IMR-90 (cell line): ENCODE measurements at regions of chr2 and their contacts with region 1.

Region 1: DNA sequence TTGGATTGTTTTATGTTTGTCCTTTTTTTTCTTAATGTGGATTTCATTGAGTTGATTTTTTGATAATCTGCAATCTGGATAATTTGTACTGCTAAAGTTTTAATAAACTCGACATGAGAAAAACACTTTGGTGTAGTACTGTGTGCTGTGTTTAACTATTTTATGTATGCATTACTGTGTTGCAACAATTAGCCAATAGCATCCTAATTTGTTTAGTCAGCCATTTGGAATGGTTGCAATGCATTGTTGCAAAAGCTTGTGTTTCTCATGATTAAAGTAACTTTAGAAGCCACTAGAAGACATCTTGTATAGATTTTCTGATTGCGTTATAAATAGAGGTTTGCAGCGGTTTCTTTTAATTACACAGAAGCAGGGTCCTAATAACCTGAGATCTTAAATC is 53.5 kb downstream of the PPIG start:
- DNase-seq: peak; percentile 81
- ATAC-seq: peak; percentile 63
- H3K4me3 ChIP-seq: no peak overlapping the region
- H3K27ac ChIP-seq: no peak overlapping the region
- H3K4me1 ChIP-seq: peaks cover 3% of the 10 kb centered on the region; the same call in 1 of the 2 replicates
- H3K27me3 ChIP-seq: no peaks in the 10 kb centered on the region
- CTCF ChIP-seq: no peak
- POLR2A ChIP-seq: no peak
- RAD21 ChIP-seq: no peak

Region 2: DNA sequence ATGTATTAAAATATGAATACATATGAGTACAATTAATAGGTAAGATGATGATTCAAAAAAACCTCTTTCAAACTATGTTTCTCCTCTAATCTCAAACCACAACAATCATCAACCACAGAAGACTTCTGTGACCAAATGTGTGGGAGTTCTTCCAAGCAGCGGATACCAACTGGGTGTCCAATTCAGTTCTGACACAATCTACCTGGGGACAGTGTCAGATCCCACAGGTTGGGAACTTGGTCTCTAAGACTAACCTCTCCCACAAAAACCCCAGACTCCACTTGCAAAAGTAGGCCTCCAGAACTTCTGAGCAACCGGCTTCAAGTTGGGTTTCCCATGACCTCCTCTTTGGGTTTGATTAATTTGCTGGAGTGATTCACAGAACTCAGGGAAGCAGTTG is 90.9 kb before region 1 on chr2:
- CTCF ChIA-PET with region 1: no interaction called
- POLR2A ChIA-PET with region 1: no interaction called
- dilution Hi-C with region 1: no loop called
- in situ Hi-C with region 1: no loop called
- intact Hi-C with region 1: no loop called
- DNase-seq: no peak
- ATAC-seq: no peak
- H3K4me3 ChIP-seq: no peak overlapping the region
- H3K27ac ChIP-seq: no peak overlapping the region
- H3K4me1 ChIP-seq: no peaks in the 10 kb centered on the region
- H3K27me3 ChIP-seq: no peaks in the 10 kb centered on the region
- CTCF ChIP-seq: no peak
- POLR2A ChIP-seq: no peak
- RAD21 ChIP-seq: no peak

Region 3: DNA sequence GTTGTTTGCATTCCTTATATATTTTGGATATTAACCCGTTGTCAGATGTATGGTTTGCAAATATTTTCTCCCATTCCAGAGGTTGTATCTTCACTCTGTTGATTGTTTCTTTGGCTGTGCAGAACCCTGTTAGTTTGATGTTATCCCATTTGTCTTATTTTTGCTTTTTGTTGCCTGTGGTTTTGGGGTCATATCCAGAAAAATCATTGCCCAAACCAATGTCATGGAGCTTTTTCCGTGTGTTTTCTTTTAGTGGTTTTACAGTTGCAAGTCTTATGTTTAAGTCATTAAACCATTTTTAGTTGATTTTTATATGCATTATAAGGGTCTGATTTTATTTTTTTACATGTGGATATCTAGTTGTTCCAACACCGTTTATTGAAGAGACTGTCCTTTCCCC is 17.7 kb before region 1 on chr2:
- CTCF ChIA-PET with region 1: no interaction called
- POLR2A ChIA-PET with region 1: no interaction called
- dilution Hi-C with region 1: no loop called
- in situ Hi-C with region 1: no loop called
- intact Hi-C with region 1: no loop called
- DNase-seq: no peak
- ATAC-seq: no peak
- H3K4me3 ChIP-seq: no peak overlapping the region
- H3K27ac ChIP-seq: no peak overlapping the region
- H3K4me1 ChIP-seq: no peaks in the 10 kb centered on the region
- H3K27me3 ChIP-seq: no peaks in the 10 kb centered on the region
- CTCF ChIP-seq: no peak
- POLR2A ChIP-seq: no peak
- RAD21 ChIP-seq: no peak

Region 4: DNA sequence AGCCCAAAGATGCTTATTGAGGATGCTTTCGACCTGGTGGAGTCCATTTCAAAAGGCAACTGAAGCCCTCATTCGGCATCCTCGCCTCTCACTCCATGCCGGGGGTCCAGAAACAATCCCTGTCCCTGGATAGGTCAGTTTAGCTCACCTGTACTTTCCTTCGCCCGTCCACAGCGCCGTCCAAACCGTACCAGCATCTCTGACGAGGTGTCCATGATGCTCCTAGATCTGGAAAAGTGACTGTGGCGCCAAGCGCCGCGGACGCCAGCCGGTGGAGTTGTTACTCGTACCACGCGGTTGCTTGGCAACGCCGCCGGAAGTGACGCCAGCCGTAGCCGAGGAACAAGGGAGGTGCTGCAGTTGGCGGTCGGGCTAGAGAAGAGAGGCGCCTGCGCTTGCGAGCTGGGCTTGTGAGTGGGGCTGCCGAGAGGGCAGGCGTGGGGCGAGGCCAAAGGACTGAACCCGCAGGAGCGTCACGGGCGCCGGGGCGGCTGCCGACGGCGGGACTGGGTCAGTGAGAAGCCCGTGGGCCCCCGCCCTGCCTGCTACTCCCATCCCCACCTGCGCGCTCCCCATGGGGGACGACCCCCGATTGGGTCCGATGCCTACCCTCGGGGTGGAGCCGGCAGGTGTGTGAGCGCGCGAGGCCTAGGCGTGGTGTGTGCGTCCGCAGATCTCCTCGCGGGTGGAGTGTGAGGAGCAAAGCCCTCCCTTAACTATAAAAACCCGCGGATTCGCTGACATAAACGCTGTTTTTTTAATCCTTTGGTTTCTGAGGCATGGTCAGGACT is 56.7 kb after region 1 on chr2 and contains the starts of genes CFAP210 and PHOSPHO2:
- CTCF ChIA-PET with region 1: interaction called, 3 read pairs
- POLR2A ChIA-PET with region 1: no interaction called
- dilution Hi-C with region 1: no loop called
- in situ Hi-C with region 1: no loop called
- intact Hi-C with region 1: loop called (anchors 2 kb)
- DNase-seq: peak; percentile 95
- ATAC-seq: peak; percentile 100
- H3K4me3 ChIP-seq: peak within 1 kb of the TSS; percentile 64
- H3K27ac ChIP-seq: peak within 1 kb of the TSS; percentile 70
- H3K4me1 ChIP-seq: no peaks in the 10 kb centered on the region; the same call in 1 of the 2 replicates
- H3K27me3 ChIP-seq: no peaks in the 10 kb centered on the region
- CTCF ChIP-seq: no peak
- POLR2A ChIP-seq: peak; percentile 75
- RAD21 ChIP-seq: no peak
- total RNA-seq, gene CFAP210: not detected in 2 replicates
- total RNA-seq, gene PHOSPHO2: 0.54 and 0.56 TPM in 2 replicates